ENCODE measurements at regions of chr7 and their contacts with region 1.

Region 1: DNA sequence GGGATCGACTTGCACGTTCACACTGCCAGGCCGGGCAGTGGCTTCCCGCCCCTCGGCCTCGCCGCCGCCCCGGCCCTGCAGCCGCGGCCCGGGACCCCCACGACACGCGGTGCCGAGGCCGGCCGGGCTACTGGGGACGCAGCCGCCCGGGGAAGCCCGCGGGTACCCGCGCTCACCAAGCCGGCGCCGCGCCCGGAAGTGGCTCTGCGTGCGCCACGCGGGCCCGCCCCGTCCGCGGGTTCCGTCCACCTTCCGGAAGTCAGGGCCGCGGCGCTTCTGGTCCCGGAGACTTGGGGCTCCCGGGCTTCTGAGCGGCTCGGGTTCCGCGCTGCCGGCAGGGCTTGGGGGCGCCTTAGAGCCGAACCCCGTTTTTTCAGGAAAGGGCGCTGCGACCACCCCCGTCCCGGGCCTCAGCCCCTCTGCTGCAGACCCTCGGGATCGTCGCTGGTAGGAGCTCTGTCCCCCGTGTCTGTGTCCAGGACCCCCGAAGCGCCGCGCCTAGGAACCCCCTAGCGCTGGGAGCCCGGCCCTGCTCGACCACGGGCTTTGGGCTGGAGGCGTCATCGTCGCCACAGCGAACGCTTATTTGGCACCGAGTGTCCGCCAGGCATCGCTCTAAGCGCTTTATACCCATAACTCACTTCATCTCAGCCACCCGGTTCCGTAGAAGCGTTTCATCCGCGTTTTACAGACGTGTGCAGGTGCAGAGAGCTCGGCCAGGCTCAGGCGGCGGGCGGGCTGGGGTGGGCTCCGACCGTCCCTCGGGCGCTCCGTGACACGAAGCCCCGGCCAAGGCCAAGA is at the start of gene PSMG3:
- DNase-seq: peak; percentile 90
- H3K4me3 Mint-ChIP-seq: peak within 1 kb of the TSS; percentile 72
- H3K27ac Mint-ChIP-seq: peak within 1 kb of the TSS; percentile 88
- H3K4me1 Mint-ChIP-seq: peaks cover 30% of the 10 kb centered on the region
- H3K27me3 Mint-ChIP-seq: no peaks in the 10 kb centered on the region
- CTCF ChIP-seq: no peak
- total RNA-seq, gene PSMG3: 38.2 and 42.1 TPM in 2 replicates

Region 2: GRCh38 chr7:2195400-2196246 is 625.6 kb after region 1 on chr7:
- CTCF ChIA-PET with region 1: interaction called, 4 read pairs
- POLR2A ChIA-PET with region 1: no interaction called
- intact Hi-C with region 1: loop called (anchors 10 kb)
- DNase-seq: no peak
- H3K4me3 Mint-ChIP-seq: no peak overlapping the region
- H3K27ac Mint-ChIP-seq: no peak overlapping the region
- H3K4me1 Mint-ChIP-seq: no peaks in the 10 kb centered on the region
- H3K27me3 Mint-ChIP-seq: no peaks in the 10 kb centered on the region
- CTCF ChIP-seq: no peak